Transverse colon (tissue), 4 donors: ENCODE measurements at regions of chr6 and their contacts with region 1.

Region 1: DNA sequence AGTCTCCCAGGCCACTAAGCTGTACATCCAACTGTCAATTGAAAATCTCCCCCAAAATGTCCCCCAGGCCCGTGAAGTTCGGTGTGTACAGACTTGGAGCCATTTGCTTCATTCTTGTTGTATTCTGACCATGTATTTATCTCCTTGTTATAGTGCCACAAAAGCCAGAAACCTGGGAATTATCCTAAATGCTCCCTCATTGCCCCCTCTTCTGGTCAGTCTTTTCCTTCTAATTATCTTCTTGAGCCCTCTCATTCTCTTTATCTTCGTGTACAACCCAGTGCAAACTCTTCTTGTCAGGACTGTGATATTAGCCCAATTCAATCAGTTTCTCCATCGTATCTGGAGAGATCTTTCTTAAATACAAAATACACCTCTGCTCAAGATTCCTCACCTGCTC is 64.7 kb downstream of the RFX6 start:
- DNase-seq: no peak
- H3K4me3 ChIP-seq: no peak overlapping the region
- H3K27ac ChIP-seq: no peak overlapping the region
- H3K4me1 ChIP-seq: peaks cover 0 to 11% (median 3%) of the 10 kb centered on the region in 4 donors
- H3K27me3 ChIP-seq: no peaks in the 10 kb centered on the region
- CTCF ChIP-seq: no peak
- EP300 ChIP-seq: no peak
- POLR2A ChIP-seq: no peak

Region 2: GRCh38 chr6:117008618-117009017 is 66.9 kb after region 1 on chr6:
- in situ Hi-C with region 1: no loop called
- intact Hi-C with region 1: loop called (anchors 2 kb)
- DNase-seq: no peak
- H3K4me3 ChIP-seq: no peak overlapping the region
- H3K27ac ChIP-seq: no peak overlapping the region
- H3K4me1 ChIP-seq: no peaks in the 10 kb centered on the region
- H3K27me3 ChIP-seq: no peaks in the 10 kb centered on the region
- CTCF ChIP-seq: no peak
- EP300 ChIP-seq: no peak
- POLR2A ChIP-seq: no peak